Activated naive CD8-positive, alpha-beta T cell treated with anti-CD3 and anti-CD28 coated beads, Interleukin-2, amount 10 ng/mL, durations not matched to agents 7 days and 5 days (primary cell): ENCODE measurements at regions of chr6 and their contacts with region 1.

Region 1: DNA sequence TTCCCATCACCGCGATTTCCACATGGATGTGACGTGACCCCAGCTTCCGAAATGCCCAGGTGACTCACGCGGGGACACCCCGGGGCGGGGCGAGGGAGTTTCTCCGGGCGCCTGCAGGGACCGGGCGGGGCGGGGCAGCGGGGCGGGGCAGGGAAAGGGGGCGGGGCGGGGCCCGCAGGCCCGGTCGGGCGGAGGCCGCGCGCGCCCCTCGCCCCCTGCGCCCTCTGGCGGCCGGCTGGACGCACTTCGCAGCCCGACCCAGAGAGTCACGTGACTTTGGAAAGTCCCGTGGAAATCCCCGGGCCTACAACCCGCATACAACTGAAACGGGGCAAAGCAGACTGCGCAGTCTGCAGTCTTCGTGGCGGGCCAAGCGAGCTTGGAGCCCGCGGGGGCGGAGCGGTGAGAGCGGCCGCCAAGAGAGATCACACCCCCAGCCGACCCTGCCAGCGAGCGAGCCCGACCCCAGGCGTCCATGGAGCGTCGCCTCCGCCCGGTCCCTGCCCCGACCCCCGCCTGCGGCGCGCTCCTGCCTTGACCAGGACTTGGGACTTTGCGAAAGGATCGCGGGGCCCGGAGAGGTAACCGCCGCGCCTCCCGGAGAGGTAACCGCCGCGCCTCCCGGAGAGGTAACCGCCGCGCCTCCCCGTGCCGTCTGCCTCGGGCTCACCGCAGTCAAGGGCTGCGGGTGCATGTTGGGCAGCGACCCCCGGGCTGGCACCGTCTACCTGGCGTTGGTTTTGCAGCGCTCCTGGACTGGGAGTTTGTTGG is at the start of gene TNFAIP3:
- DNase-seq: peak; percentile 97
- ATAC-seq: peak; percentile 80
- H3K4me3 Mint-ChIP-seq: peak within 1 kb of the TSS; percentile 90
- H3K27ac Mint-ChIP-seq: peak within 1 kb of the TSS; percentile 95
- H3K4me1 Mint-ChIP-seq: peaks cover 46% of the 10 kb centered on the region
- H3K27me3 Mint-ChIP-seq: no peaks in the 10 kb centered on the region
- total RNA-seq, gene TNFAIP3: 88.6 to 89.5 TPM

Region 2: DNA sequence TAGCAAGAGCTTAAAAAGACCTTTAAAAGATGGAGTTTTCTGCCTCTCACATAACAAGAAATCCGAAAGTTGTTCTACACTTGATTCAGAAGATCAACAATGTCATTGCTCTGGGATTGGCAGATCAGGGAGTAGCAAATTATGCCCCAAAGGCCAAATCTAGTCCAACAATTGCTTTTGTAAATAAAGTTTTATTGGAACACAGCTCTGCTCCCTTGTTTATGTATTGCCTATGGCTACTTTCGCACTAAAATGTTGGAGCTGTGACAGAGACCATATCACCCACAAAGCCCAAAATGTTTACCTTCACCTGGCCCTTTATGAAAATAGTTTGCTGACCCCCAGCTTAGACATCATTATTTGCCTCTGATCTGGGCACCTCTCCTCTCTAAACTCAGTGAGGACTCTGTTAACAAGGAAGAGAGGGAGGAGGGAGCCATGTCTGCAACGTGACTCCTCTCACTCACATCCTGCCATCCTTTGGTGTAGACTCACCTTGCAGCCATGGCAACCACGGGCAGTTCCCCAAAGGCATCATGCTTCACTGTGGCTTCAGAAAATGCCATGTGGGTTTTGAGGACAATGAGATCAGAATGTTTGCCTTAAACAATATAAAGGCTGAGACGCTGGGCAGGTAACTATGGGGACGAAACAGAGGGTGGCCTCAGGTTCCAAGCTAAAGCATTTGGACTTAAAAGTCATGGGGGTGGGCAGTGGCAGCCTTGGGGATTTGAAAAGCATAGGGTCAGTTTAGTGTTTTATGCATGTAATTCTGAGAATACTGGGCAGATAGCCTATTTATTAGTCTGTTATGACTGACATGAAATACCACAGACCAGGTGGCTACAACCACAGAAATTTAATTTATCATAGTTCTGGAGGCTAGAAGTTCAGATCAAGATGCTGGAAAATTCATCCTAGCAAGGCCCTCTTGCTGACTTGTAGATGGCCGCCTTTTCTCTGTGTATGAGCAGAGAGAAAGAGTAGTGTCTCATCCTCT is 149.7 kb before region 1 on chr6:
- POLR2A ChIA-PET with region 1: interaction called, 22 read pairs
- DNase-seq: peak; percentile 65
- ATAC-seq: peak; percentile 69
- H3K4me3 Mint-ChIP-seq: peak overlapping the region; percentile 56
- H3K27ac Mint-ChIP-seq: peak overlapping the region; percentile 81
- H3K4me1 Mint-ChIP-seq: peaks cover 36% of the 10 kb centered on the region
- H3K27me3 Mint-ChIP-seq: no peaks in the 10 kb centered on the region

Region 3: DNA sequence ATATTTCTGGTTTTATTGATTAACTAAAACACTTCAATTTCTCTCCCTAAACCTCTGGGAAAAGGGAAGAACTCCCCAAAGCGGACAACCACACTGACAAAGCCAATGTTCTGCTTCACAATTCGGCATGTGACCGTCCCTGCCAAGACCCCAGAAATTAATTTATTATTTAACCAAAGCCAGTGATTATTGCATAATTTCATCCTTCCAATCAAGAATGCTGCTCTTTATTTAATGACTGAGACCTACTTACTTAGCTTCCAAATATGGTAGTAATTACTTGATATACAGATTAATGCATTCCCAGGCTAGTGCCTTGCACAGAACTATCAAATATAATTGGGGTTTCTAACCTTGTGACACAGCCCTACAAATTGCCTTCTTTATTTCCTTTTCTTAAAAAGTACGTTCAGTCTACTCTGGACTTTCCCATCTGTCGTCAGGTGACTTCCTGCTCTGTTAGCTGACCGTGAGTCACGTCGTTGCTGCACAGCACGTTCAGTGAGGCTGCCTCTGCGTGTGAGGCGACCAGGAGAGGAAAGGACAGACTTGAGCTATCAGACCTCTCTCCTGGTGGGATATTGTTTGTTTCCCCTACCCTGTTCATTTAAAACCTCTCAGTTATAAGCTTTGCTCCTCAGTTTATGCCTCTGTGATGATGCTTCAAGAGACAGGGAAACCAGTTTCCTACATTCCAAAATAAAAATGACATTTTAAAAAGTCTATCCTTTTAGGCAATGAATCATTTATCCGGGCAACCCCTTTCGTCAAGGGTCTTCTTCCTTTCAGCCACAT is 55.8 kb before region 1 on chr6:
- POLR2A ChIA-PET with region 1: interaction called, 13 read pairs
- DNase-seq: peak; percentile 64
- ATAC-seq: peak; percentile 97
- H3K4me3 Mint-ChIP-seq: peak overlapping the region; percentile 32
- H3K27ac Mint-ChIP-seq: peak overlapping the region; percentile 80
- H3K4me1 Mint-ChIP-seq: peaks cover 34% of the 10 kb centered on the region
- H3K27me3 Mint-ChIP-seq: no peaks in the 10 kb centered on the region

Region 4: GRCh38 chr6:137883400-137884148 is 16.5 kb after region 1 on chr6:
- POLR2A ChIA-PET with region 1: interaction called, 15 read pairs
- DNase-seq: no peak
- ATAC-seq: peak; percentile 28
- H3K4me3 Mint-ChIP-seq: peak overlapping the region; percentile 76
- H3K27ac Mint-ChIP-seq: peak overlapping the region; percentile 98
- H3K4me1 Mint-ChIP-seq: peaks cover 31% of the 10 kb centered on the region
- H3K27me3 Mint-ChIP-seq: no peaks in the 10 kb centered on the region